CD8-positive, alpha-beta memory T cell (primary cell): ENCODE measurements at regions of chr5 and their contacts with region 1.

Region 1: GRCh38 chr5:112174959-112175594 is 244.0 kb downstream of the EPB41L4A start:
- DNase-seq: peak in 3 of 5 donors; percentile 5 to 30 (median 14)
- H3K4me3 ChIP-seq: no peak overlapping the region
- H3K4me3 Mint-ChIP-seq: peak overlapping the region in 2 of 7 donors; percentile 13 to 14
- H3K27ac ChIP-seq: no peak overlapping the region
- H3K27ac Mint-ChIP-seq: no peak overlapping the region
- H3K4me1 ChIP-seq: no peaks in the 10 kb centered on the region
- H3K4me1 Mint-ChIP-seq: peaks cover 3 to 6% (median 5%) of the 10 kb centered on the region in 3 donors
- H3K27me3 ChIP-seq: no peaks in the 10 kb centered on the region
- H3K27me3 Mint-ChIP-seq: peaks cover 5 to 23% of the 10 kb centered on the region in 2 donors

Region 2: DNA sequence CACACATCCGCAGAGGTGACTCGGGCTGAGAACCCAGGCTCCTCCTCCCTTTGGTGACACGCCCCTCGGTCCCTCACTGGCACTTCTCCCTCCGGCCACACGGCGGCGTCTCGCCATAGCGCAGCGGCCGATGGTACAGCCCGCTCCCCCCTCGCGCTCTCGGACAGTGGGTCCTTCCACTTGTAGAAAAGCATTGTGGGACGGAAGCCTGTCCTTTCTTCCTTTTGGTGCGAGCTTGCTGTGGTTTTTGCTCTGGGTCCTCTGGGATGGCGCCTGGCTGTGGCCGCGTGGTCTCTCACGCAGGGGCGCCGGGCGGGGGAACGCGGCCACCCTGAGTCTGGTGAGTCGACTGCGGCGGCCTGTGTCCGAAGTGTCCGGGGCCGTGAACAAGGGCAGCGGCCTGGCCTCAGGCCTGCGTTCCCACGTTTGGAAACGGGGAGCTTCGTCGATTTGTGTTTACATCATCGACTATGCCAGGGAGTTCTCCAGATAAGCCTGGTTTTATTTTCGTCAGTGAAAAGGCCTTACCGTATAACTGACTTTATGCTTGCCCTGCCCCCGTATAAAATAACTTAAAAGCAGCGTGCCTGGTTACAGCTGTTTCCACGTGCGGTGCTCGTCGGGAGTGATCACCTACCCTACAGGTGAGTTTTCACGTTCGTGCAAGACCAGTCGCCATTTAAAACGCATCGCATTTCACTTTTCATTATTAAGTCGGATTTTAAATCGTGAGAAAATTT is 14.3 kb before region 1 on chr5:
- CTCF ChIA-PET with region 1: interaction called, 20 read pairs
- POLR2A ChIA-PET with region 1: no interaction called
- DNase-seq: peak; percentile 83 to 93 (median 89)
- H3K4me3 ChIP-seq: peak overlapping the region; percentile 90
- H3K4me3 Mint-ChIP-seq: peak overlapping the region; percentile 85 to 96 (median 93)
- H3K27ac ChIP-seq: peak overlapping the region; percentile 80
- H3K27ac Mint-ChIP-seq: peak overlapping the region; percentile 57 to 97 (median 88)
- H3K4me1 ChIP-seq: peaks cover 26% of the 10 kb centered on the region
- H3K4me1 Mint-ChIP-seq: peaks cover 31 to 43% (median 37%) of the 10 kb centered on the region in 3 donors
- H3K27me3 ChIP-seq: no peaks in the 10 kb centered on the region
- H3K27me3 Mint-ChIP-seq: no peaks in the 10 kb centered on the region